ENCODE measurements at regions of chr15 and their contacts with region 1.

Region 1: GRCh38 chr15:62306851-62307504 is 141.9 kb upstream of the C2CD4B start:
- DNase-seq: no peak
- H3K4me3 ChIP-seq: no peak overlapping the region
- H3K27me3 ChIP-seq: peaks cover 2% of the 10 kb centered on the region; the same call in 1 of the 2 replicates
- CTCF ChIP-seq: peak; percentile 71

Region 2: GRCh38 chr15:61871926-61872522 is 435.0 kb before region 1 on chr15:
- CTCF ChIA-PET with region 1: interaction called, 10 read pairs
- POLR2A ChIA-PET with region 1: no interaction called
- DNase-seq: no peak
- H3K4me3 ChIP-seq: no peak overlapping the region
- H3K27me3 ChIP-seq: no peaks in the 10 kb centered on the region
- CTCF ChIP-seq: peak; percentile 45

Region 3: DNA sequence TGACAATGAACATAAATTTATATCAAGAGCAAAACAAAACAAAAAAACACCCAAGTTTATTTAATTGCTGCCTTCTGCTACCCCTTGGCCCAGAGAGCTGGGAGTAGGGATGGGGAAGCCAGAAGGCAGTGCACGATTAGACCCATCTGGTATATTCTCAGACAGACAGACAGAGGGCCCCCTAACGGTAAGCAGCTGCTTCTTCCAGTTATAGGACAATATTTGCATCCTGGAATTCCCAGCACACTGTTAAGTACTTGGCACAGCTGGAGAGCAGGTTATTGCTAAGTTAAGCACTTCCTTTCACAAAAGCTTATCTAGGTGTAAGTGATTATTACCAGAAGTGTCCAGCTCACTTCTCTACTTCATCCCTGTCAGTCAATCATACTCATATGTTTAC is 181.2 kb before region 1 on chr15:
- CTCF ChIA-PET with region 1: interaction called, 14 read pairs
- POLR2A ChIA-PET with region 1: no interaction called
- DNase-seq: no peak
- H3K4me3 ChIP-seq: no peak overlapping the region
- H3K27me3 ChIP-seq: no peaks in the 10 kb centered on the region
- CTCF ChIP-seq: peak; percentile 60

Region 4: DNA sequence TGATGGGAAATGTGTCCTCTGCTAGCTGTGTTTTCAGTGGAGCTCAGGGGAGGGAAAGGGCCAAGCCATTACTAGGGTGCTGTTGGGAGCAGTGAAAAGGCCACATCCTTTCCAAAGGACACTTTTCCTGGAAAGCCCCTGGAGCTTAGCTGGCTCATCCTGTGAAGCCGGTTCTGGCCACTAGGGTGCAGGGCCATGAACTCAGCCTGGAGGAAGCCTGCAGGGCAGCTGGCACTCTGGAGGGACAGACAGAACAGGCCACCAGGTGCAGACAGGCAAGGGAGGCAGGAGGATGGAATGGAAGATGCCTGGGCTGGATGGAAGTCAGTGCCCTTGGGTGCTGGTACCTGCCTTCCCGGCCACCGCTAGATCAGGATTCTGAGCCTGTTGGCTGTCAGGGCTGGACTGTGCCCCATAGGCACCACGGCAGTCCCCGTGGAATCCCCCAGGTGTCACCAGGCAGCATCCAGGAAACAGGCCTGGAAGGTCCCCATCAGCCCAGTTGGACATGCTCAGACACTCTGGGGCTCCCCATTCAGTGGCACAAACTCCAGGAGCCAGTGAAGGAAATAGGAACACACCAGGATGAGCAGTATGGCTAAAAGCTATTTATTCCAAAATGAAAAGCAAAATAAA is 65.7 kb before region 1 on chr15:
- CTCF ChIA-PET with region 1: interaction called, 10 read pairs
- POLR2A ChIA-PET with region 1: no interaction called
- DNase-seq: no peak
- H3K4me3 ChIP-seq: no peak overlapping the region
- H3K27me3 ChIP-seq: 0 out of 2 replicates have a peak, but pooled peaks cover 3% of the 10 kb centered on the region
- CTCF ChIP-seq: peak; percentile 44

Region 5: GRCh38 chr15:62287066-62287857 is 19.7 kb before region 1 on chr15:
- CTCF ChIA-PET with region 1: interaction called, 21 read pairs
- POLR2A ChIA-PET with region 1: interaction called, 7 read pairs
- DNase-seq: no peak
- H3K4me3 ChIP-seq: no peak overlapping the region
- H3K27me3 ChIP-seq: peaks cover 2% of the 10 kb centered on the region; the same call in 1 of the 2 replicates
- CTCF ChIP-seq: no peak

Region 6: DNA sequence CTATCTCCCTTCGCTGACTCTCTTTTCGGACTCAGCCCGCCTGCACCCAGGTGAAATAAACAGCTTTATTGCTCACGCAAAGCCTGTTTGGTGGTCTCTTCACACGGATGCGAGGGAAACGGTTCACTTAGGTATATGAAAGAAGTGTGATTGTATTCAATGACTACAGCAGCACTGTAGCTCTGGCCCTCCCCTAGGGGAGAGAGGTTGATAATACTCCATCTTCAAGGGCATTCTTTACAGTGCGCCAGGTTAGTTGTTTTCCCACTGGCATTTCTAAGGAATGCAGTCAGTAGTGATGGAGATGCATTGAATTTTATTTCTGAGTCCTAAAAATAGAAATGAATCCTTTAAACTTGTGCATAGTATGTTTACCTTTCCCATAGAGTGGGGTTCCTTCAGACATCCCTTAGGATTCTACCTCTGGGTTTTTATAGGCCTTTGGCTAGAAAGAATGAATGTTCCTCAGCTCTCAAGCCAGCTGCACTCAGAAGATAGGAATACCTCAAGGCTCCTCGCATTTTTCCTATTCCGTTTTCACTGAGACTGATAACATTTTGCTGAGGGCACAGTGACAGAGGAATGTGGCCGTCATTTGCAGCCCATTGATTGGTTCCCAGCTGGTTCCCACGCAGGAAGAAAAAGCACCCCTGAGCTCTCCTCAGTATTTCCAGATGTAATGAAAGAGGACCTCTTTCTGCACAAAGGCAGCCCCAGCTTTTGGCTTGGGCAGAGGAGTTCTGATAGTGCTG is 10.0 kb before region 1 on chr15:
- CTCF ChIA-PET with region 1: interaction called, 16 read pairs
- POLR2A ChIA-PET with region 1: interaction called, 7 read pairs
- DNase-seq: no peak
- H3K4me3 ChIP-seq: no peak overlapping the region
- H3K27me3 ChIP-seq: peaks cover 9% of the 10 kb centered on the region
- CTCF ChIP-seq: no peak

Measured in BJ (cell line).